HEK293T (cell line): ENCODE measurements at regions of chr5 and their contacts with region 1.

Region 1: GRCh38 chr5:151771259-151772028 is at the start of gene G3BP1:
- DNase-seq: peak; percentile 91

Region 2: GRCh38 chr5:151799407-151799806 is 28.0 kb after region 1 on chr5:
- CTCF ChIA-PET with region 1: no interaction called
- POLR2A ChIA-PET with region 1: interaction called, 10 read pairs
- DNase-seq: no peak